CD8-positive, alpha-beta memory T cell (primary cell): ENCODE measurements at regions of chr9 and their contacts with region 1.

Region 1: GRCh38 chr9:73132034-73132776 is 19.5 kb upstream of the ANXA1 start:
- DNase-seq: peak; percentile 50 to 87 (median 83)
- H3K4me3 ChIP-seq: peak overlapping the region; percentile 70
- H3K4me3 Mint-ChIP-seq: peak overlapping the region; percentile 83 to 91 (median 87)
- H3K27ac ChIP-seq: peak overlapping the region; percentile 89
- H3K27ac Mint-ChIP-seq: peak overlapping the region; percentile 90 to 100 (median 92)
- H3K4me1 ChIP-seq: peaks cover 8% of the 10 kb centered on the region
- H3K4me1 Mint-ChIP-seq: peaks cover 24 to 43% (median 41%) of the 10 kb centered on the region in 3 donors
- H3K27me3 ChIP-seq: no peaks in the 10 kb centered on the region
- H3K27me3 Mint-ChIP-seq: no peaks in the 10 kb centered on the region

Region 2: GRCh38 chr9:73151653-73152542 is 19.7 kb after region 1 on chr9 and contains the start of gene ANXA1:
- CTCF ChIA-PET with region 1: interaction called, 5 read pairs
- POLR2A ChIA-PET with region 1: interaction called, 28 read pairs
- DNase-seq: peak in 3 of 5 donors; percentile 58 to 75 (median 59)
- H3K4me3 ChIP-seq: peak within 1 kb of the TSS; percentile 79
- H3K4me3 Mint-ChIP-seq: peak within 1 kb of the TSS; percentile 92 to 99 (median 93)
- H3K27ac ChIP-seq: peak within 1 kb of the TSS; percentile 93
- H3K27ac Mint-ChIP-seq: peak within 1 kb of the TSS; percentile 79 to 99 (median 98)
- H3K4me1 ChIP-seq: peaks cover 61% of the 10 kb centered on the region
- H3K4me1 Mint-ChIP-seq: peaks cover 61 to 73% (median 70%) of the 10 kb centered on the region in 3 donors
- H3K27me3 ChIP-seq: no peaks in the 10 kb centered on the region
- H3K27me3 Mint-ChIP-seq: no peaks in the 10 kb centered on the region
- total RNA-seq, gene ANXA1: 87.7 to 93.2 TPM